Activated CD8-positive, alpha-beta T cell treated with anti-CD3 and anti-CD28 coated beads, Interleukin-2, amount 10 ng/mL, durations not matched to agents 7 days and 5 days (primary cell): ENCODE measurements at regions of chr19 and their contacts with region 1.

Region 1: DNA sequence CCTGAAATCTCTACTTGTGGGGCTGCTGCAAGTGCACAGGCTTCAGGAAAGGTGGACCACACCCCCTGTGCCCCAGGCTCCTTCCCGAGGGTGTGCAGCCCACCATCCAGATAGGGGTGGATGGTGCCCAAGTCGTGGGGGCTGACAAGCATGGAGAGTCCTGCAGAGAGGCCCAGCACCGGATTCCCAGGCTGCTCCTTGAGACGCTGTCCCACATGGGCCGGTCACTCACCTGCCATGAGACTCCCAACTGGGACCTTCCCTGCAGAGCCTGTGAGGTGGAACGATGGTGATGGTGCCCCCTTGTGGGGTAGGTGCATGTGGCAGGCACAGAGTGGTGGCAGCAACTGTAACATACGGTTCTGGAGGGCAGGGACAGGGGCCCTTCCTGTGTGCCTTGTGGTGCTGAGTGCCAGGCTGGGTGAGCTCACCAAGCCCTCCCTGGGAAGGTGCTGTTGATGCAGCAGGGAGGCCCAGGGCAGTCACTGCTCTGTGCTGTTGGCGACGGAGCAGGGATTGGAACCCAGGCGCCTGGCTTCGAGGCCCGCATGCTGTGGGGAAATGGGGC is 33.0 kb downstream of the PPP1R37 start:
- DNase-seq: peak; percentile 82
- ATAC-seq: peak; percentile 89
- H3K4me3 Mint-ChIP-seq: no peak overlapping the region
- H3K27ac Mint-ChIP-seq: no peak overlapping the region
- H3K4me1 Mint-ChIP-seq: peaks cover 36% of the 10 kb centered on the region
- H3K27me3 Mint-ChIP-seq: no peaks in the 10 kb centered on the region

Region 2: DNA sequence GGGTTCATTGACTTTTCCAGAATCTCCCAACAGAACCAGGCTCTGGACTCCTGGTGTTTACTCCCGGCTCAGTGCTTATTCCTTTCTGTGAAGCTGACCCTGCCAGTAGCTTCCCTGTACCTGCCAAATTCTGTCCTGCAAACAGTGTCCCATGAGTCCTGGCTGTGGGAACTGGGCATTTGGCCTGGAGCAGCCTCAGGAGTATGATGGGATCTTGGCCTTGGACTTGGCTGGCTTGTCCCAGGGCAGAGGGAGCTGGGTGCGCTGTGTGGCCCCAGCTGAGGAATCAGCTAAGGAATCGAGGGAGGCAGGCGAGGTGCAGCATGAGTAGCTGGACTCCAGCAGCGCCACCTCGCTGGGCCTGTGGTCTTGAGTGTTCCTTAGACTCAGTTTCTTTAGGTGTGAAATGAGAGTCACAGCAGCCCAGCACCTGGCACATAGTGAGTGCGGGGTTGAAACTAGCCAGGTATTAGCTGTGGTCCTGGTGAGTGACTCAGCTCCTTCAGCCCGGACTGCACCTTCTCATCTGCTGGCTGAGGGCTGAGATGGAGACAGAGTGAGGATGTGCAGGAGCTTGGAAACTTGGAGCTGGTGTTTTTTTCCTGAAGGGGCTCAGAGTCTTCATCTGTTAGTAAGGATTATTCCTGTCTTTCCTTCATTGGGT is 76.8 kb before region 1 on chr19:
- CTCF ChIA-PET with region 1: no interaction called
- POLR2A ChIA-PET with region 1: no interaction called
- DNase-seq: no peak
- ATAC-seq: no peak
- H3K4me3 Mint-ChIP-seq: no peak overlapping the region
- H3K27ac Mint-ChIP-seq: peak overlapping the region; percentile 37
- H3K4me1 Mint-ChIP-seq: peaks cover 29% of the 10 kb centered on the region
- H3K27me3 Mint-ChIP-seq: no peaks in the 10 kb centered on the region

Region 3: GRCh38 chr19:45137179-45137761 is 11.3 kb after region 1 on chr19:
- CTCF ChIA-PET with region 1: interaction called, 18 read pairs
- POLR2A ChIA-PET with region 1: interaction called, 3 read pairs
- DNase-seq: no peak
- ATAC-seq: no peak
- H3K4me3 Mint-ChIP-seq: no peak overlapping the region
- H3K27ac Mint-ChIP-seq: no peak overlapping the region
- H3K4me1 Mint-ChIP-seq: peaks cover 8% of the 10 kb centered on the region
- H3K27me3 Mint-ChIP-seq: no peaks in the 10 kb centered on the region

Region 4: GRCh38 chr19:45152504-45153338 is 26.7 kb after region 1 on chr19:
- CTCF ChIA-PET with region 1: interaction called, 12 read pairs
- POLR2A ChIA-PET with region 1: no interaction called
- DNase-seq: peak; percentile 74
- ATAC-seq: peak; percentile 54
- H3K4me3 Mint-ChIP-seq: peak overlapping the region; percentile 63
- H3K27ac Mint-ChIP-seq: peak overlapping the region; percentile 77
- H3K4me1 Mint-ChIP-seq: peaks cover 34% of the 10 kb centered on the region
- H3K27me3 Mint-ChIP-seq: peaks cover 33% of the 10 kb centered on the region